ENCODE measurements at regions of chr5 and their contacts with region 1.

Region 1: GRCh38 chr5:71782771-71783770 is 64.0 kb downstream of the CARTPT start:
- DNase-seq: peak; percentile 67

Region 2: DNA sequence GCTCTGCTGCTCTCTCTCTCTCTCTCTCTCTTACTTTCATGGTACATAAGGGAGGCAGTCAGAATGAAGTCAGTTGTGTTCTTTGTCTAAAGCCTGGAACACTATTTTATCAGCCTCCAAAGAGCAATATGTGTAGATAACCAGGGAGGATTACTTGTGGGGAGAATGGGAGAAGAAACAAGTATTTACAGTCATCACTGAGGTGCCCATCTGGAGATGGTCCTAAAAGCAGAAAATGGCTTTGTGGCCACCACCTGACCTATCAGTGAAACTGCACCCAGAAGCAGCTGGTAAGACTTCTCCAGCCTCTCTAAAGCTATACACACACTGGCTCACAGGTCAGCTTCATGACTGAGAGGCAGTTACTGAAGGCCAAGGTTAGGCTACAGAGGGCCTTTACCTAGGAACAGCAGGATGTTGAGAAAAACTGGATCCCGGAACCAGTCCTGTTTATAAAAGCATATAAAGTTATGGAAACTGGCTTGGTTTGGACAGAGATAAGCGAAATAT is 461.8 kb after region 1 on chr5:
- in situ Hi-C with region 1: loop called (anchors 10 kb)
- DNase-seq: peak; percentile 36

Measured in Caki2 (cell line).